WTC11 (cell line): ENCODE measurements at regions of chr9 and their contacts with region 1.

Region 1: GRCh38 chr9:88660611-88661010 is 125.6 kb downstream of the NXNL2 start:
- DNase-seq: peak; percentile 56
- ATAC-seq: peak; percentile 85
- H3K4me3 Mint-ChIP-seq: no peak overlapping the region
- H3K27ac Mint-ChIP-seq: no peak overlapping the region
- H3K4me1 Mint-ChIP-seq: no peaks in the 10 kb centered on the region
- H3K27me3 Mint-ChIP-seq: no peaks in the 10 kb centered on the region
- CTCF ChIP-seq: no peak

Region 2: DNA sequence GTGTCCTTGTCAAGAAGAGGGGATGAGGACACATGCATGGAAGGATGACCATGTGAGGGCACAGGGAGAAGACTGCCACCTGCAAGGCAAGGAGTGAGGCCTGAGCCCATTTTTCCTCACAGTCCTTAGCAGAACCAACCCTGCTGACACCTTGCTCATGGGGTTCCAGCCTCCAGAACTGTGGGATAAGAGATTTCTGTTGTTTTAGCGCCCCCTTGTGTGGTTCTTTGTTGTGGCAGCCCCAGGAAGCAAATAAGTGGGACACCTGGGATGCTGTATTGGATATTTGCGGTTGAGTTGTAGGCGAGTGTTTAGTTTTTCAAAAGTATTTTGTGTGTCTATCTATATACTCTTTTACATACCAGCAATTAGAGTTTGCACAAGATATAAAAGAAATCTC is 80.7 kb after region 1 on chr9:
- CTCF ChIA-PET with region 1: no interaction called
- POLR2A ChIA-PET with region 1: no interaction called
- DNase-seq: peak; percentile 55
- ATAC-seq: peak; percentile 73
- H3K4me3 Mint-ChIP-seq: no peak overlapping the region
- H3K27ac Mint-ChIP-seq: no peak overlapping the region
- H3K4me1 Mint-ChIP-seq: peaks cover 23% of the 10 kb centered on the region
- H3K27me3 Mint-ChIP-seq: no peaks in the 10 kb centered on the region
- CTCF ChIP-seq: peak; percentile 77

Region 3: GRCh38 chr9:89000973-89001916 is 340.6 kb after region 1 on chr9:
- CTCF ChIA-PET with region 1: interaction called, 16 read pairs
- POLR2A ChIA-PET with region 1: no interaction called
- DNase-seq: peak; percentile 94
- ATAC-seq: peak; percentile 91
- H3K4me3 Mint-ChIP-seq: peak overlapping the region; percentile 7; the same call in 1 of the 2 replicates
- H3K27ac Mint-ChIP-seq: peak overlapping the region; percentile 4; the same call in 1 of the 2 replicates
- H3K4me1 Mint-ChIP-seq: peaks cover 13% of the 10 kb centered on the region
- H3K27me3 Mint-ChIP-seq: no peaks in the 10 kb centered on the region
- CTCF ChIP-seq: peak; percentile 72